Right lobe of liver (tissue), 6 donors: ENCODE measurements at regions of chr2 and their contacts with region 1.

Region 1: DNA sequence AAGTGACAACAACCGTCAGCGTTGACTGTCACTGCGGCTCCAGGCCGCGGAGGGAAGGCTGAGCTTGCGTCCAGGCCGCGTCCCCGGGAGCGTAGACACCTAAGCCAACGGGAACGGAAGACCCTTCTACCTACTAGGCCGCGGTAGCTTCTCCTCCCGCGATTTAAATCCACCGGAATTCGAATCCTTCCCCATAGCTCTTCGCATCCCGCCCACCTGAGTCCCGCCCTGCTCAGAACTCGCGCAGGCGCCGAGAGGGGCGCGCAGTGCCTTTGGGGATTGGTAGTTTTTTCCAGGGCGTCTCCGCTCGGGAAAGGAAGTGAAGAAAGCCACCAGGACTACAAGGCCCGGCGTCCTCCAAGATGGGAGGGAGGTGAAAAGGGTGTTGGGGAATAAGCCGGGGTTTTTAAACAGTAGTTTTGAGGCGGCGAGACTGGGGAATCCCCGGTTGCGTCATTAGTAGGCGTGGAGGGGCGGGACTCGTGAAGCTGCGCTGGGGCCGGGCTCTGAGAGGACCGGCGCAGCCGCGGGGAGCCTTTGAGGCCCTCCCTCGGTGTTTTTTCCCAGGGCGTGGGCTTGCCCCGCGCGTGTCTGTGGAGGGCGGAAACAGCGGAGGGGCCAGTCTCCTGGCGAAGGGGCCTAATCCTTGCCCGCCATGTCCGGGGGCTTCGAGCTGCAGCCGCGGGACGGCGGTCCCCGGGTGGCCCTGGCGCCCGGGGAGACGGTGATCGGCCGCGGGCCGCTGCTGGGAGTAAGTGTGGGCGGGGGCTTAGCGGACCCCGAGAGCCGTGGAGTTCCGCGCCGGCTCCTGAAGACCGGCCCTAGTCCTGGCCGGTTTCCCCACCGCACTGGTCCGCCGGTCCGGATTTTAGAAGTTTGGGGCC is at the starts of genes APLF and FBXO48:
- DNase-seq: peak; percentile 95 to 98 (median 98)
- ATAC-seq: peak; percentile 95 to 98 (median 97)
- H3K4me3 ChIP-seq: peak within 1 kb of the TSS; percentile 69 to 84 (median 84)
- H3K27ac ChIP-seq: peak within 1 kb of the TSS; percentile 66 to 91 (median 72)
- H3K4me1 ChIP-seq: peaks cover 0 to 14% (median 0%) of the 10 kb centered on the region in 4 donors
- H3K27me3 ChIP-seq: no peaks in the 10 kb centered on the region
- CTCF ChIP-seq: no peak
- POLR2A ChIP-seq: peak; percentile 75
- total RNA-seq, gene APLF: 1.3 to 2.3 (median 1.9) TPM
- total RNA-seq, gene FBXO48: 0.82 to 1.5 (median 1.2) TPM

Region 2: GRCh38 chr2:68577183-68577582 is 109.9 kb after region 1 on chr2:
- intact Hi-C with region 1: no loop called
- DNase-seq: no peak
- ATAC-seq: no peak
- H3K4me3 ChIP-seq: no peak overlapping the region
- H3K27ac ChIP-seq: no peak overlapping the region
- H3K4me1 ChIP-seq: no peaks in the 10 kb centered on the region
- H3K27me3 ChIP-seq: no peaks in the 10 kb centered on the region
- CTCF ChIP-seq: no peak
- POLR2A ChIP-seq: no peak

Region 3: GRCh38 chr2:68715353-68716041 is 248.2 kb after region 1 on chr2:
- intact Hi-C with region 1: loop called in 1 of 2 experiments (anchors 10 kb)
- DNase-seq: peak; percentile 60 to 74 (median 66)
- ATAC-seq: peak; percentile 89 to 97 (median 96)
- H3K4me3 ChIP-seq: no peak overlapping the region
- H3K27ac ChIP-seq: peak overlapping the region in 1 of 3 donors; percentile 25
- H3K4me1 ChIP-seq: peaks cover 0 to 3% (median 0%) of the 10 kb centered on the region in 4 donors
- H3K27me3 ChIP-seq: no peaks in the 10 kb centered on the region
- CTCF ChIP-seq: peak; percentile 64 to 88 (median 82)
- POLR2A ChIP-seq: no peak

Region 4: DNA sequence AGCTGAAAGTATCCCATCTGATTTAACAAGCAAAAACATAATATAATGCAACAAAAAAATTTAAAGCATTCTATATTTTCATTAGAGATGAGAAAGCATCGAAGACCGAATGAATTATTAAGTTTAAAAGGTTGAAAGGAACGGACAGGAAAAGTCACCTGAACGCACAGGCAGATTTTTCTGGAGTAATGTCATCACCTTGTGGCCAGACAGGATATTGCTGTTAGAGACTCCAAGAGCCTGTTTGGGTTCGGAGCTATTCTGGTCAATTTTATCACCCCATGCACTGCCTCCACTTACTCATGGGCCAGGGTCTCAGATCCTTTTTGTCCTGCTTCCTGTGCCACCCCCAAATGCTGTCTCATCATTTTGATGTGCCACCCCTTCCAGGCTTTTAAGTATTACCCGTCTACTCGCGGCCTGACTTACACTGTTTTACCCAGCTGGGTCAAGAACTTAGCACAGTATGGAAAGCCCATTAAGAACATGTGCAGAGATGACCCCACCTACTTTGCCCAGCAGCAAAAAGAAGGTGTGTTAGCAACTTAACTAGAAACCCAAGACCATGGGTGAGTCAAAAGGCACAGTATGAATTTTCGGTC is 458.1 kb after region 1 on chr2:
- intact Hi-C with region 1: loop called in 1 of 2 experiments (anchors 10 kb)
- DNase-seq: no peak
- ATAC-seq: peak; percentile 79 to 84 (median 83)
- H3K4me3 ChIP-seq: no peak overlapping the region
- H3K27ac ChIP-seq: no peak overlapping the region
- H3K4me1 ChIP-seq: peaks cover 0 to 10% (median 0%) of the 10 kb centered on the region in 4 donors
- H3K27me3 ChIP-seq: no peaks in the 10 kb centered on the region
- CTCF ChIP-seq: peak; percentile 85 to 92 (median 90)
- POLR2A ChIP-seq: no peak

Region 5: DNA sequence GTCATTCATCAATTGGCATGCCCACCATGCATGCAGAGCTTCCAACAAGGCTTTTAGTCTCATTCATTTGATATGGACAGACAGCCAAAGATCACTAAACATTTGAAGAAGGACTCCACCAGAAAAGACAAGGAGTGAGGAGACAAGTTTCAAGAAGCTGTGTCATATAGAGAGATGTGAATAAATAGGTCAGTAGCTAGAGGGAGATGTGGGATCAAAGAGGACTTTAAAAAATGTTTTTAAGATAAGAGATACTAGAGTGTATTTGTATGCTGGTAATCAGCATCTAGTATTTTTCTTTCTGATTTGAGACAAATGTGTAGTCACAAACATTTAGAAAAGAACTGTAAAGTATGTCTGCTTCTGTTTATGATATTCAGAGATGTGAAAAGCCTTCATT is 594.2 kb after region 1 on chr2:
- intact Hi-C with region 1: no loop called
- DNase-seq: no peak
- ATAC-seq: peak in 1 of 4 donors; percentile 19
- H3K4me3 ChIP-seq: no peak overlapping the region
- H3K27ac ChIP-seq: peak overlapping the region in 1 of 3 donors; percentile 44
- H3K4me1 ChIP-seq: peaks cover 0 to 20% (median 6%) of the 10 kb centered on the region in 4 donors
- H3K27me3 ChIP-seq: no peaks in the 10 kb centered on the region
- CTCF ChIP-seq: peak in 1 of 4 donors; percentile 10
- POLR2A ChIP-seq: no peak